AG04450 (cell line): ENCODE measurements at regions of chr4 and their contacts with region 1.

Region 1: GRCh38 chr4:159201168-159201567 is 98.3 kb downstream of the RAPGEF2 start:
- DNase-seq: no peak
- H3K4me3 ChIP-seq: no peak overlapping the region
- H3K27ac ChIP-seq: no peak overlapping the region
- H3K27me3 ChIP-seq: no peaks in the 10 kb centered on the region
- CTCF ChIP-seq: no peak

Region 2: DNA sequence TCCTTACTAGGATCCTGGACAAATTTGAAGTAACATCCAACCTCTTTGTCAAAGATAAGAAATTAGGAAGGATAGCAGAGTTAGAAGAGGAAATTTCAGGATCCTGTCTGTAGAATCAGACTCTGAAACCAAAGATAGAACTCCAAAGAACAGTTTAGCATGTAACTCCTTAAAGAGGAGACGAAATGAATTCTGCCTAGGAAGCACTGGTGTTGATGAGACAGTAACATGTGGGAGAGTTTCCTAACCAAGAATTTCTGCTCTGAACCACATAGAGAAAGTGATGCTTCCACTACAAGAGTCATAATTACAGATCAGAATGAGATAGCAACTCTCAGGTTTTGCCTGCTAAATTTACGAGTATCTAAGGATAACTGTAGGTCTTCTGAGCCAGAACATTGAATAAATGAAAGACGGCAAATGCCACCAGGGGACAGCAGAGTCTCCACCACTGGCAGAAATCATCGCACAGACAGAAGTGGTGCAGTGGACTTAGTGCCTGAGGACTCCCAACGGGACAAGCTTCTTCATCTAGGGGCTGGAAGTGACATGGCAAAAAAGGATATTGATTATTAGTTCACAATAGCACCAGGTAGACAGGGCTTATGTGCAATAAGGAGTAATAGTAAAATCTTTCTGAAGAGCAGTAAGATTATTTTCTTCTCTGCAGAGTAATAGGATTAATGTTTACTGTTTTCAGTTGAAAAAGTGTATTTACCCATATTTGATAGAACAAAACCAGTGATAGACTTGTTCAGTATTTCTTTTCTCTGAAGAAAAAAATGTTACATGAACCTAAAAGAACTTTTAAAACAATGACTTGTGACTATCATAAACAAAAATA is 471.2 kb before region 1 on chr4:
- CTCF ChIA-PET with region 1: interaction called, 20 read pairs
- POLR2A ChIA-PET with region 1: no interaction called
- DNase-seq: peak; percentile 33
- H3K4me3 ChIP-seq: no peak overlapping the region
- H3K27ac ChIP-seq: no peak overlapping the region
- H3K27me3 ChIP-seq: no peaks in the 10 kb centered on the region
- CTCF ChIP-seq: peak; percentile 93

Region 3: DNA sequence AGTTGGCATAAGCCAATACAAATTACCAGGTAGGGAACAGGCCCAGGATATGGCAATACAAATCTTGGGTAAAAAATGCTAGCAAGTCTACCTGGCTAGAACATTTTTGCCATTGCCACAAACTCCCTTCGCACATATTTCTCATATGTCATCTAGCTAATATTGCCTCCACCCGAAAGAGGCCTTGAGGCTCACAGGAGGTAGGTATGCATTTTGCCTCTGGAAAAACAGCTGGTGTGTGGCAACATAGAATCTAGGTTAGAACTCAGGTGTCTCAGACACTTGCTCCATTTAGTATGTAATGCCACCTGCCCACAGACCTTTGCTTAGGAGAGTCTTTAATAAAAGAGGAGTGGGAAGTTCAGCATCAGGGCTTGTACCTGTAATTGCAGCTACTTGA is 114.6 kb before region 1 on chr4:
- CTCF ChIA-PET with region 1: no interaction called
- POLR2A ChIA-PET with region 1: no interaction called
- DNase-seq: no peak
- H3K4me3 ChIP-seq: no peak overlapping the region
- H3K27ac ChIP-seq: no peak overlapping the region
- H3K27me3 ChIP-seq: no peaks in the 10 kb centered on the region
- CTCF ChIP-seq: no peak

Region 4: GRCh38 chr4:159212675-159213293 is 11.6 kb after region 1 on chr4:
- CTCF ChIA-PET with region 1: interaction called, 43 read pairs
- POLR2A ChIA-PET with region 1: no interaction called
- DNase-seq: no peak
- H3K4me3 ChIP-seq: no peak overlapping the region
- H3K27ac ChIP-seq: no peak overlapping the region
- H3K27me3 ChIP-seq: no peaks in the 10 kb centered on the region
- CTCF ChIP-seq: no peak

Region 5: GRCh38 chr4:159400558-159401225 is 199.5 kb after region 1 on chr4:
- CTCF ChIA-PET with region 1: no interaction called
- POLR2A ChIA-PET with region 1: no interaction called
- DNase-seq: peak; percentile 37
- H3K4me3 ChIP-seq: no peak overlapping the region
- H3K27ac ChIP-seq: no peak overlapping the region
- H3K27me3 ChIP-seq: no peaks in the 10 kb centered on the region
- CTCF ChIP-seq: no peak